Aorta (tissue), 5 donors: ENCODE measurements at regions of chrX and their contacts with region 1.

Region 1: GRCh38 chrX:73943693-73944562 is 360.1 kb upstream of the ZCCHC13 start:
- DNase-seq: peak; percentile 94 to 95
- ATAC-seq: peak; percentile 99
- H3K4me3 ChIP-seq: peak overlapping the region; percentile 62 to 93
- H3K27ac ChIP-seq: peak overlapping the region; percentile 34 to 37
- H3K4me1 ChIP-seq: no peaks in the 10 kb centered on the region
- H3K27me3 ChIP-seq: no peaks in the 10 kb centered on the region

Region 2: GRCh38 chrX:73840120-73840924 is 103.6 kb before region 1 on chrX:
- intact Hi-C with region 1: no loop called
- DNase-seq: no peak
- ATAC-seq: no peak
- H3K4me3 ChIP-seq: no peak overlapping the region
- H3K27ac ChIP-seq: no peak overlapping the region
- H3K4me1 ChIP-seq: no peaks in the 10 kb centered on the region
- H3K27me3 ChIP-seq: no peaks in the 10 kb centered on the region

Region 3: DNA sequence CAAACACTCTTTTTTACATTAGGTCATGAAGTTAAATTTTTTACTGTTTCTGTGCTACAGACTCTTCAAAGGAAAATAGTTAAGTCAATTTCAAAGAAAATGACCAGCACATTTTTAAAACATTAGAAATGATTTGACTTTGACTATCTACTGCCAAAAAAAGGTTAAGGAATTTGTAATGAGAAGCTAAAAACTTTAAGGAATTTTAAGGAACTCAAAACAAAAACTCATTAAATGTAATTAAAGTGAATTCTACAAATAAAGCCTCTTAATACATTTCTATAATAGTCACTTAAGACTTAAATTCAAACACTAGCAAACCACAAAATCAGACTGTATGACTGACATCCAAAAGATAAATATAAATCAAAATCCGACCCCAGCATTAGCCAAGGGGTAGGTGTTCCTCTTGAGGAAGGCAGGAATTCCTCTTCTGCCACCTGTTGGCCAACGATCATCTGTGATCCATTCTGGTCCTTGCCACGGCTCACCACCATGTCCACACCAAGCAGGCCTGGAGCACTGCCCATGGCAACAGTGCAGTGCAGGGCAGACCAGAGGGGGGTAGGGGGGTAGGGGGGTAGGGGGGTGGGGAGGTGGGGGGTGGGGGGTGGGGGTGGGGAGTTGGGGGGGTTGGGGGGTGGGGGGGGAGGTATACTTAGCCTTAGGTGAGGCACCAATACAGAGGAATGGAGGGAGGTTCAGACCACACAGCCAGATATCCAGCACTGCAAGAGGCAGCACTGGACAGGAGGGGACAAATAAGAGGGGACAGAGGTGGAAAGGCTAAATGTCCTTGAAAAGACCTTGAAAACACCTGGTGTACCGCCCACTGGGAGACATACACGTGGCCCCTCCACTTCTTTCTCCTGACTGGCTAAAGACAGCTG is 93.6 kb before region 1 on chrX:
- intact Hi-C with region 1: loop called in 1 of 2 experiments (anchors 5 kb)
- DNase-seq: no peak
- ATAC-seq: no peak
- H3K4me3 ChIP-seq: peak overlapping the region in 1 of 2 donors; percentile 34
- H3K27ac ChIP-seq: no peak overlapping the region
- H3K4me1 ChIP-seq: no peaks in the 10 kb centered on the region
- H3K27me3 ChIP-seq: no peaks in the 10 kb centered on the region

Region 4: DNA sequence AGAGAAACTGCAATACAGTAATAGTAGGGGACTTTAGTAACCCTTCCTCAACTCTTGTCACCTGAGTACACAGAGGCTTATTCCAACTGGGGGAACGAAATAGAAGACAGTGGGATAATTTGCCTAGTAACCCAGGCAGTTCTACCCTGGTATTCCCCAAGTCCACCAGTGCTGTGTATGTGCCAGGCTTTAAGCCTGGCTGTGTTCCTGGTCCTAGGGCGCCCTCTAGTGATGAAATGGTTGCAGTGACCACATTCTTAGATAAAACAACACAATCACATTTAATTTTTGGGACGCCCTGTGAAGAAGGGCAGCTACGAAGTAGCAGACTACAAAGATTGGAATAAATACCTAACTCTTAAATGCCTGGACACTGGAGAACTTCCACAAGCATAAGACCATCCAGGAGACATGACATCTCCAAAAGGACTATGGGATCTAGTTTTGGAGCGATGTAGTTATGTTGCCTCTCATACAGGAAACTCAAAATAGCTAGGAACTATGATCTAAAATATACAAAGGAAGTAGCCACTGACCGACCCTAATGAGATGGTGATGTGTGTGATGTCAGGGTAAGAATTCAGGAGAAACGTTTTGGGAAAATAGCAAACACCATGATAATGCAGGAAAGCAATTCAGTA is 71.6 kb after region 1 on chrX:
- intact Hi-C with region 1: loop called in 1 of 2 experiments (anchors 10 kb)
- DNase-seq: peak in 1 of 2 donors; percentile 59
- ATAC-seq: peak; percentile 84
- H3K4me3 ChIP-seq: no peak overlapping the region
- H3K27ac ChIP-seq: no peak overlapping the region
- H3K4me1 ChIP-seq: no peaks in the 10 kb centered on the region
- H3K27me3 ChIP-seq: no peaks in the 10 kb centered on the region